HEK293 (cell line): ENCODE measurements at regions of chr3 and their contacts with region 1.

Region 1: DNA sequence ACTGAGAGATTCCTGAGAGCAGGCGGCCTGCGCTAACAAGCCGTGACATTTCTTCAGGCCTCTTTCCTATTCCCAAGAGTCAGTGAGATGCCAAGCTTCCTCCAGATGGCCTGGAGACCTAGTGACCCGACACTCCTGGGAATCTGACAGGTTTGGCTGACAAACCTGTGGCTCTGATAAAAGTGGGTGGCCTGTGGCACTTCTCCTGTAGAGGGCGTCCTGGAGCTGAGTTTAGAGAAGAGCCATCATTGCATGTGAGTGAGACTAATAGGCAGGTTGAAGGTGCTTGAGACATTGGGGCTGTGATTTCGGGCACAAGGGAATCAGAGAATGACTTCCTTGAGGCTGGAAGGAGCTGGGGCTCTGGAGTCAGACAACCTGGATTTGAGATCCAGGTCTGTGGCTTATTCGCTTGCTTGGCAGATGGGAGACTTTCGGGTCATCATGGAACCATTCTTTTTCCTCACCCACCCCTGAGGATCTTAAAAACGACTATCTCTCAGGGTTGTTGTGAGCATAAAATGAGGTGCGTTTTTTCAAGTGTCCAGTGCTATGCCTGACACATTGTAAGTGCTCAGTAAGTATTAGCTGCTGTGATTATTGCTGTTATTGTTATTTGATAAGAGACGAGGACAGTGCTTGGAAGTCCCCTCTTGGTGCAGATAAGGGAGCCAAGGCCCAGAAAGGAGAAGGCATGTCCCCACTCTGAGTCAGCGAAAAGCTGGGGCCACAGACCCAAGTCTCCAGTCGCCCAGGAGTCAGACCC is 77.2 kb downstream of the SCN10A start:
- H3K4me3 ChIP-seq: no peak overlapping the region
- H3K27ac ChIP-seq: no peak overlapping the region
- H3K4me1 ChIP-seq: no peaks in the 10 kb centered on the region
- CTCF ChIP-seq: no peak

Region 2: DNA sequence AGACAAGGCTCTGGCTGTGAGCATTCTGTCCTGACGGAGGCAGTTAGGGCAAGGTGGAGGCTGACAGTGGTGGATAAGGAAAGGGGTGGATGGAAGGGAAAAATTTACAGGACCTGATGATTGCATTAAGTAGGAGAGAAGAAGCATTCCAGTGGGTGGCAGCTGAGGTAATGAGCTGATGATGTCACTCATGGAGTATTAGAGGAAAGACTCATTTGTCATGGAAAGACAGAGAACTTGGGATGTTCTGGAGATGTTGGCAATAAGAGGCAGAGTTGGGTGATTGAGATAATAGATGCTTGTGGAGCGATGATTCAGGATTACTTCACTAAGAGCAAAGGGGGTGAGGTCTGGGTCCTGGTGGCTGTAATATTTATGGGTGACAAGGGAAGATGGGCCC is 25.7 kb before region 1 on chr3:
- CTCF ChIA-PET with region 1: no interaction called
- POLR2A ChIA-PET with region 1: no interaction called
- H3K4me3 ChIP-seq: no peak overlapping the region
- H3K27ac ChIP-seq: no peak overlapping the region
- H3K4me1 ChIP-seq: no peaks in the 10 kb centered on the region
- CTCF ChIP-seq: no peak

Region 3: DNA sequence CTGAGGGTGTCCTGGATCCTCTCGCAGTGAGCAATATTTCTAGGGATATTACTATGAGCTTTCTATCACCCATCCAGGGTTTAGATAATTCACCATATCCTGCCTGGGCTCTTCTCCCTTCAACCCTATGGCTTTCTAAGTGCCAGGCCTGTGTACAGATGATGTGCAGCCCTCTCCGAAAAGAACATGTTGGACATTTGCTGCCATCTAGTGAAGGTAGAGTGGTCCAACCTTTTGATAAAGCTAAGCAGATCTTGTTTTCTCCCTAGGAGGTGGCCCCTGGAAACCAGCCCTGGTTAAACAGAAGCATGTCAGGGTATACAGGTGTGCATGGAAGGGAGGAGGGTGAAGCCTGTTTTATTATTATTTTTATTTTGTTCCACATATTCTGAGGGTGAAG is 105.1 kb after region 1 on chr3:
- CTCF ChIA-PET with region 1: interaction called, 18 read pairs
- POLR2A ChIA-PET with region 1: no interaction called
- H3K4me3 ChIP-seq: no peak overlapping the region
- H3K27ac ChIP-seq: no peak overlapping the region
- H3K4me1 ChIP-seq: no peaks in the 10 kb centered on the region
- CTCF ChIP-seq: no peak; the same call in 1 of the 2 replicates